Activated CD4-positive, alpha-beta memory T cell treated with anti-CD3 and anti-CD28 coated beads for 36 hours (primary cell): ENCODE measurements at regions of chr17 and their contacts with region 1.

Region 1: GRCh38 chr17:58172369-58173071 is 5.7 kb downstream of the OR4D2 start:
- DNase-seq: peak; percentile 59
- H3K4me3 Mint-ChIP-seq: no peak overlapping the region
- H3K27ac Mint-ChIP-seq: no peak overlapping the region
- H3K4me1 Mint-ChIP-seq: peaks cover 36% of the 10 kb centered on the region
- H3K27me3 Mint-ChIP-seq: peaks cover 3% of the 10 kb centered on the region

Region 2: GRCh38 chr17:58082870-58083490 is 89.5 kb before region 1 on chr17 and contains the start of gene DYNLL2:
- CTCF ChIA-PET with region 1: no interaction called
- POLR2A ChIA-PET with region 1: no interaction called
- intact Hi-C with region 1: no loop called
- DNase-seq: peak; percentile 94
- H3K4me3 Mint-ChIP-seq: peak within 1 kb of the TSS; percentile 84
- H3K27ac Mint-ChIP-seq: peak within 1 kb of the TSS; percentile 81
- H3K4me1 Mint-ChIP-seq: peaks cover 33% of the 10 kb centered on the region
- H3K27me3 Mint-ChIP-seq: no peaks in the 10 kb centered on the region
- total RNA-seq, gene DYNLL2: 24.8 to 26.8 TPM

Region 3: GRCh38 chr17:58121925-58122324 is 50.6 kb before region 1 on chr17:
- CTCF ChIA-PET with region 1: interaction called, 20 read pairs
- POLR2A ChIA-PET with region 1: no interaction called
- intact Hi-C with region 1: loop called (anchors 1 kb)
- DNase-seq: peak; percentile 29
- H3K4me3 Mint-ChIP-seq: no peak overlapping the region
- H3K27ac Mint-ChIP-seq: no peak overlapping the region
- H3K4me1 Mint-ChIP-seq: peaks cover 6% of the 10 kb centered on the region
- H3K27me3 Mint-ChIP-seq: no peaks in the 10 kb centered on the region

Region 4: GRCh38 chr17:58224315-58224714 is 51.8 kb after region 1 on chr17:
- CTCF ChIA-PET with region 1: no interaction called
- POLR2A ChIA-PET with region 1: no interaction called
- intact Hi-C with region 1: no loop called
- DNase-seq: no peak
- H3K4me3 Mint-ChIP-seq: no peak overlapping the region
- H3K27ac Mint-ChIP-seq: no peak overlapping the region
- H3K4me1 Mint-ChIP-seq: peaks cover 15% of the 10 kb centered on the region
- H3K27me3 Mint-ChIP-seq: peaks cover 10% of the 10 kb centered on the region

Region 5: GRCh38 chr17:58317421-58318064 is 145.0 kb after region 1 on chr17:
- CTCF ChIA-PET with region 1: no interaction called
- POLR2A ChIA-PET with region 1: no interaction called
- intact Hi-C with region 1: no loop called
- DNase-seq: peak; percentile 89
- H3K4me3 Mint-ChIP-seq: no peak overlapping the region
- H3K27ac Mint-ChIP-seq: peak overlapping the region; percentile 85
- H3K4me1 Mint-ChIP-seq: peaks cover 18% of the 10 kb centered on the region
- H3K27me3 Mint-ChIP-seq: no peaks in the 10 kb centered on the region

Region 6: GRCh38 chr17:58991718-58992331 is 819.3 kb after region 1 on chr17:
- CTCF ChIA-PET with region 1: no interaction called
- POLR2A ChIA-PET with region 1: no interaction called
- intact Hi-C with region 1: no loop called
- DNase-seq: peak; percentile 37
- H3K4me3 Mint-ChIP-seq: no peak overlapping the region
- H3K27ac Mint-ChIP-seq: peak overlapping the region; percentile 64
- H3K4me1 Mint-ChIP-seq: peaks cover 14% of the 10 kb centered on the region
- H3K27me3 Mint-ChIP-seq: no peaks in the 10 kb centered on the region